A549 (cell line): ENCODE measurements at regions of chr15 and their contacts with region 1.

Region 1: DNA sequence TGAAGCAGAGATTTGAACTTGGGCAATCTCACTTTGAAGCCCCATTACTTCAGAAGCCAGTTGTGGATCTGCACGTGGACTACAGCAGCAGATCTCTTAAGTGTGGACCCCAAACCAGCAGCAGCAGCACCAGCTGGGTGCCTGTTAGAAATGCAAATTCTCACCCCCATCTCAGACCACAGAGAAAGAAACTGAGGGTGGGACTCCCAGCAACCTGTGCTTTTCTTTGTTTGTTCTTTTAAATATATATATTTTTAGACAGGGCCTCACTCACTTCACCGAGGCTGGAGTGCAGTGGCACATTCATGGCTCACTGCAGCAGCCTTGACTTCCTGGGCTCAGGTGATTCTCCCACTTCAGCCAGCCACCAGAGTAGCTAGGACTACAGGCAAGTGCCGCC is 53.2 kb downstream of the SLTM start:
- DNase-seq: no peak
- ATAC-seq: no peak
- H3K4me3 ChIP-seq: no peak overlapping the region
- H3K27ac ChIP-seq: no peak overlapping the region
- H3K4me1 ChIP-seq: no peaks in the 10 kb centered on the region
- CTCF ChIP-seq: no peak
- EP300 ChIP-seq: no peak
- POLR2A ChIP-seq: no peak
- RAD21 ChIP-seq: no peak

Region 2: GRCh38 chr15:58864602-58865424 is 15.5 kb before region 1 on chr15:
- CTCF ChIA-PET with region 1: interaction called, 11 read pairs
- POLR2A ChIA-PET with region 1: no interaction called
- DNase-seq: no peak
- ATAC-seq: no peak; a peak in 1 of 6 replicates
- H3K4me3 ChIP-seq: no peak overlapping the region
- H3K27ac ChIP-seq: 0 out of 6 replicates have a peak overlapping the region, but pooled peaks of 1 of the 2 experiments have one; percentile 9
- H3K4me1 ChIP-seq: no peaks in the 10 kb centered on the region
- CTCF ChIP-seq: no peak
- EP300 ChIP-seq: no peak
- POLR2A ChIP-seq: no peak
- RAD21 ChIP-seq: no peak